ENCODE measurements at regions of chr7 and their contacts with region 1.

Region 1: GRCh38 chr7:107879400-107880035 is 11.5 kb upstream of the DLD start:
- DNase-seq: peak; percentile 47
- H3K4me3 Mint-ChIP-seq: no peak overlapping the region
- H3K27ac Mint-ChIP-seq: peak overlapping the region; percentile 24
- H3K4me1 Mint-ChIP-seq: peaks cover 20% of the 10 kb centered on the region
- H3K27me3 Mint-ChIP-seq: no peaks in the 10 kb centered on the region

Region 2: DNA sequence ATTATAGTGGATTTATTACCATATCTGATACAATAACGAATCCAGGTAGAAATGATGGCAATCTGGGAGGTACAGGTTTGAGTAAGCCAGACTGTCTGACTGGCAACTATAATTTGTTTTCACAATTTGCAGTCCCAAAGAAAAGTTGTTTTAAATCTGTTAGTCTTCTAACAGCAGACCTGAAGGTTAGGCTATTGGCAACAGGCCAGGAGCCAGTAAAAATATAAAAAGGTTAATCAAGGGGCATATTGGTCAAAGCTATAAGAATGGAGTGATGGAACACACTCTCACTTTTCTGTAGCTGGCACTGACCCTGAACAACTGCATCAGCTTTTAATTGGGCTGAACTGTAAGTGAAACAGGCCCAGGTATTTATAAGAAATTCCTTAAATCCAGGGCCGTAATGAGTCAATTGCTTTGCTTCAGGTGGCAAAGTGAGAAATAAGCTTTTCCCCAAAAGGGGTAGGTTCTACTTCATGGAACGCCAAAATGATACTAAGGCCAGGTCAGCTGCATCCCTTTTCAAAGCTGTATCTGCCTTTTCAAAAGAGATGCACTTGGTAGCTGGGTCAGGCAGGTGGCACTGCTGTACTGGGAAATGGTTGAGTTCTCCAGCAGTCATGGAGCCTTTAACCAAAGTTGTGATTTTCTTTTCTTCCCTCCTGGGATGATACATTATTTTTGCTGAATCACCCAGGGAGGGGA is 416.6 kb before region 1 on chr7:
- CTCF ChIA-PET with region 1: interaction called, 19 read pairs
- POLR2A ChIA-PET with region 1: no interaction called
- intact Hi-C with region 1: loop called (anchors 1 kb)
- DNase-seq: peak; percentile 61
- H3K4me3 Mint-ChIP-seq: no peak overlapping the region
- H3K27ac Mint-ChIP-seq: no peak overlapping the region
- H3K4me1 Mint-ChIP-seq: no peaks in the 10 kb centered on the region
- H3K27me3 Mint-ChIP-seq: no peaks in the 10 kb centered on the region

Region 3: GRCh38 chr7:107661081-107661864 is 218.2 kb before region 1 on chr7:
- CTCF ChIA-PET with region 1: interaction called, 8 read pairs
- POLR2A ChIA-PET with region 1: no interaction called
- intact Hi-C with region 1: loop called (anchors 5 kb)
- DNase-seq: peak; percentile 70
- H3K4me3 Mint-ChIP-seq: peak overlapping the region; percentile 84
- H3K27ac Mint-ChIP-seq: peak overlapping the region; percentile 93
- H3K4me1 Mint-ChIP-seq: peaks cover 30% of the 10 kb centered on the region
- H3K27me3 Mint-ChIP-seq: peaks cover 11% of the 10 kb centered on the region

Region 4: GRCh38 chr7:107743567-107744344 is 135.8 kb before region 1 on chr7 and contains the start of gene CBLL1:
- CTCF ChIA-PET with region 1: interaction called, 333 read pairs
- POLR2A ChIA-PET with region 1: interaction called, 14 read pairs
- intact Hi-C with region 1: loop called (anchors 1 kb)
- DNase-seq: peak; percentile 99
- H3K4me3 Mint-ChIP-seq: peak within 1 kb of the TSS; percentile 97
- H3K27ac Mint-ChIP-seq: peak within 1 kb of the TSS; percentile 100
- H3K4me1 Mint-ChIP-seq: peaks cover 49% of the 10 kb centered on the region
- H3K27me3 Mint-ChIP-seq: no peaks in the 10 kb centered on the region
- total RNA-seq, gene CBLL1: 38.7 to 40.4 TPM

Region 5: GRCh38 chr7:107890962-107891635 is 11.6 kb after region 1 on chr7 and contains the start of gene DLD:
- CTCF ChIA-PET with region 1: interaction called, 33 read pairs
- POLR2A ChIA-PET with region 1: no interaction called
- intact Hi-C with region 1: no loop called
- DNase-seq: peak; percentile 97
- H3K4me3 Mint-ChIP-seq: peak within 1 kb of the TSS; percentile 89
- H3K27ac Mint-ChIP-seq: peak within 1 kb of the TSS; percentile 94
- H3K4me1 Mint-ChIP-seq: peaks cover 36% of the 10 kb centered on the region
- H3K27me3 Mint-ChIP-seq: no peaks in the 10 kb centered on the region
- total RNA-seq, gene DLD: 103 to 116 TPM